ENCODE measurements at regions of chr3 and their contacts with region 1.

Region 1: GRCh38 chr3:129016356-129016719 is 15.2 kb downstream of the EFCC1 start:
- DNase-seq: peak; percentile 31
- H3K4me3 Mint-ChIP-seq: peak overlapping the region; percentile 71
- H3K27ac Mint-ChIP-seq: peak overlapping the region; percentile 91
- H3K4me1 Mint-ChIP-seq: peaks cover 46% of the 10 kb centered on the region
- H3K27me3 Mint-ChIP-seq: peaks cover 2% of the 10 kb centered on the region

Region 2: GRCh38 chr3:128969993-128970739 is 46.2 kb before region 1 on chr3:
- intact Hi-C with region 1: loop called (anchors 1 kb)
- DNase-seq: peak; percentile 52
- H3K4me3 Mint-ChIP-seq: no peak overlapping the region
- H3K27ac Mint-ChIP-seq: no peak overlapping the region
- H3K4me1 Mint-ChIP-seq: peaks cover 10% of the 10 kb centered on the region
- H3K27me3 Mint-ChIP-seq: peaks cover 9% of the 10 kb centered on the region

Region 3: GRCh38 chr3:129001817-129002619 is 14.3 kb before region 1 on chr3:
- intact Hi-C with region 1: loop called (anchors 1 kb)
- DNase-seq: peak; percentile 20
- H3K4me3 Mint-ChIP-seq: peak overlapping the region; percentile 27
- H3K27ac Mint-ChIP-seq: no peak overlapping the region
- H3K4me1 Mint-ChIP-seq: peaks cover 37% of the 10 kb centered on the region
- H3K27me3 Mint-ChIP-seq: peaks cover 52% of the 10 kb centered on the region

Region 4: DNA sequence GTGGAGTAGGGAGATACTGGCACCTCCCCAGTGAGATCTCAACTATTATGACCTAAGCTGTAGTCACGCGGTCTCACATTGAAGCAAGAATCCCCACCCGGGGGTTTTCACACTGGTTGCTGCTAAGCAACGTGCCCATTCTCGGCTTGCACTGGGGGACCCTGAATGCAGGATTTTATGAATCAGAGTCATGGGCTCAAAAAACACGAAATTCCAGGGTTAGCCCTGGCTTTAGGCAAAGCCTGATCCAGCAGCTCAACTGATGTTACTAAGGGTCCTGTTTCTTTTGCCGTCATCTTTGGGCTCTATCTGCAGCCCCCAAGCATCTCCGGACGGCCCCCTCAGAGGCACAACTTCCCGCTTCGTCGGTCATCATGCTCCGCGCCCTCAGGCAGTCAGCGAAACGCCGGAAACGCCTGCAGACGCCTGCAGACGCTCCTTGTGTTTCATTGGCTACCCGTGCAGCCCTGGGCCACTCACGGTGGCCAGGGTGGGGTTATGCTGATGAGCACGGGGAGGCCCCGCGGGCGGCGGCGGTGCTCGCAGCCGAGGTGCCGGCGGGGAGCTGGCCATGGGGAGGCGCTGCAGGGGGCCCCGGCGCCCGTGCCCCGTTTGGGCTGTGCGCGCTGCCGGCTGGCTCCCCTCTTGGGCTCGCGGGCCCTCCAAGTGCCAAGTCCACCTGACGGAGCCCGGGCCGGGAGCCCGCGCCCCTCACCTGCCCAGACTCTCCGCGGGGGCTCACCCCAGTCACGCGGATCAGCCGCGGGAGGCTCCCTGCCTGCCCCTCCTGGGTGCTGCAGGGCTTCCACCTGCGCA is 10.6 kb after region 1 on chr3:
- intact Hi-C with region 1: loop called (anchors 1 kb)
- DNase-seq: peak; percentile 93
- H3K4me3 Mint-ChIP-seq: peak overlapping the region; percentile 80
- H3K27ac Mint-ChIP-seq: peak overlapping the region; percentile 87
- H3K4me1 Mint-ChIP-seq: peaks cover 24% of the 10 kb centered on the region
- H3K27me3 Mint-ChIP-seq: peaks cover 13% of the 10 kb centered on the region